ENCODE measurements at regions of chr10 and their contacts with region 1.

Region 1: DNA sequence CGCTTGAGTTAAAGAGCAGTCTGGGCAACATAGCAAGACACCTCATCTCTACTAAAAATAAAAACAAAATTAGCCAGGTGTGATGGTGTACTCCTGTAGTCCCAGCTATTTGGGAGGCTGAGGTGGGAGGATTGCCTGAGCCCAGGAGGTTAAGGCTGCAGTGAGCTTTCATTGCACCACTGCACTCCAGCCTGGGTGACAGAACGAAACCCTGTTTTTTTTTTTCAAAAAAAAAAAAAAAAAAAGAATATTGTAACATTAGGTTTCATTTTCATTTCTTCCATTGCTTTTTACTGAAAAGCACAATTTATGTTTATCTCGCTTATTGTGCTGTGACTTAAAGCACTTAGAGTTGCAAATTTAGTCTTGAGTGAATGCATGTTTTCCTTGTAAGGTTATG is 80.0 kb downstream of the MLLT10 start:
- DNase-seq: no peak
- H3K4me3 ChIP-seq: no peak overlapping the region
- H3K4me3 Mint-ChIP-seq: no peak overlapping the region
- H3K27ac Mint-ChIP-seq: no peak overlapping the region
- H3K4me1 ChIP-seq: no peaks in the 10 kb centered on the region
- H3K4me1 Mint-ChIP-seq: no peaks in the 10 kb centered on the region
- H3K27me3 ChIP-seq: no peaks in the 10 kb centered on the region
- H3K27me3 Mint-ChIP-seq: no peaks in the 10 kb centered on the region
- CTCF ChIP-seq: no peak

Region 2: DNA sequence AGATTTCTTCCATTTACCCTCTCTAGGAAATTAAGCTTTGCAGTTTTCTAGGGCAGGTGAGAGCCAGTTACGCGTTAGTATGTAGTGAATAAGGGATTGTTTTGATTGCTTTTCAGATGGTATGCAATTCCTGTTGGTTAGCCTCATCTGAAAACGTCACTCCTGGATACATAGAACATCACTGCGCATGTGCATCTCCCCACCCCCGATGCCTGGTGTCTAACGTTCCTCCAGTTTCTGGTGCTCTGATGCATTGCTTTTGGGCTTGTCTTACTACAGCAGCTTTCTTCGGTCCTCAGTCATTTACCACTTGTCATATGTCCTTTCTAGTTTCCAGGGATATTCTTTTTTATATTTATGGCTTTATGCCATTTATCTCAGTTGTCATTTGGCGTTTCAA is 57.5 kb before region 1 on chr10:
- CTCF ChIA-PET with region 1: no interaction called
- POLR2A ChIA-PET with region 1: no interaction called
- intact Hi-C with region 1: loop called (anchors 2 kb)
- DNase-seq: no peak
- H3K4me3 ChIP-seq: no peak overlapping the region
- H3K4me3 Mint-ChIP-seq: no peak overlapping the region
- H3K27ac Mint-ChIP-seq: no peak overlapping the region
- H3K4me1 ChIP-seq: peaks cover 4% of the 10 kb centered on the region; the same call in 1 of the 2 replicates
- H3K4me1 Mint-ChIP-seq: no peaks in the 10 kb centered on the region
- H3K27me3 ChIP-seq: no peaks in the 10 kb centered on the region
- H3K27me3 Mint-ChIP-seq: no peaks in the 10 kb centered on the region
- CTCF ChIP-seq: no peak

Region 3: DNA sequence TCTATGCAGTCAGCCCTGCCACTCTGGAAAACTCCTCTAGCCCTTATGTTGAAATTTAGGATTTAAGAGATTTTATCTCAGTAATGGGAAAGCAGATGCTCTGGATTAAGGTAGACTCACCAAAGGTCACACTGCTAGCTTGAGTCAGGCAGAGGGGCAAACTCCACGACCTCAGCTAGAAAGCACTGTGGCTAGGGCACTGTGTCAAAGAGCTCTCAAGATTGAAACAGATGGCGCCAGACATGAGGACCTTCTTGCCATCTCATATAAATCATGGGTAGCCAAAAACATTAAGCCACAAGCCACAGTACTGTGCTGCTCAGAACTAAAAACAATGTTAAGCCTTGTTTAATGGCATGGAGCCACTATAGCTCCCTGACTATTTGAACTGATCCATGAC is 200.9 kb after region 1 on chr10:
- CTCF ChIA-PET with region 1: no interaction called
- POLR2A ChIA-PET with region 1: no interaction called
- intact Hi-C with region 1: no loop called
- DNase-seq: no peak
- H3K4me3 ChIP-seq: no peak overlapping the region
- H3K4me3 Mint-ChIP-seq: no peak overlapping the region
- H3K27ac Mint-ChIP-seq: no peak overlapping the region
- H3K4me1 ChIP-seq: no peaks in the 10 kb centered on the region
- H3K4me1 Mint-ChIP-seq: no peaks in the 10 kb centered on the region
- H3K27me3 ChIP-seq: no peaks in the 10 kb centered on the region
- H3K27me3 Mint-ChIP-seq: no peaks in the 10 kb centered on the region
- CTCF ChIP-seq: no peak

Region 4: GRCh38 chr10:21849607-21850006 is 235.6 kb after region 1 on chr10:
- CTCF ChIA-PET with region 1: interaction called, 11 read pairs
- POLR2A ChIA-PET with region 1: no interaction called
- intact Hi-C with region 1: no loop called
- DNase-seq: no peak
- H3K4me3 ChIP-seq: no peak overlapping the region
- H3K4me3 Mint-ChIP-seq: no peak overlapping the region
- H3K27ac Mint-ChIP-seq: no peak overlapping the region
- H3K4me1 ChIP-seq: no peaks in the 10 kb centered on the region
- H3K4me1 Mint-ChIP-seq: no peaks in the 10 kb centered on the region
- H3K27me3 ChIP-seq: no peaks in the 10 kb centered on the region
- H3K27me3 Mint-ChIP-seq: no peaks in the 10 kb centered on the region
- CTCF ChIP-seq: no peak